ENCODE measurements at regions of chr11 and their contacts with region 1.

Region 1: GRCh38 chr11:65868076-65868667 is 4.4 kb downstream of the EFEMP2 start:
- DNase-seq: peak in 2 of 10 donors; percentile 38 to 61
- ATAC-seq: peak; percentile 57 to 73
- H3K4me3 Mint-ChIP-seq: no peak overlapping the region
- H3K27ac Mint-ChIP-seq: peak overlapping the region in 3 of 10 donors; percentile 14 to 43 (median 33)
- H3K4me1 Mint-ChIP-seq: peaks cover 18 to 46% (median 33%) of the 10 kb centered on the region in 4 donors
- H3K27me3 Mint-ChIP-seq: no peaks in the 10 kb centered on the region

Region 2: DNA sequence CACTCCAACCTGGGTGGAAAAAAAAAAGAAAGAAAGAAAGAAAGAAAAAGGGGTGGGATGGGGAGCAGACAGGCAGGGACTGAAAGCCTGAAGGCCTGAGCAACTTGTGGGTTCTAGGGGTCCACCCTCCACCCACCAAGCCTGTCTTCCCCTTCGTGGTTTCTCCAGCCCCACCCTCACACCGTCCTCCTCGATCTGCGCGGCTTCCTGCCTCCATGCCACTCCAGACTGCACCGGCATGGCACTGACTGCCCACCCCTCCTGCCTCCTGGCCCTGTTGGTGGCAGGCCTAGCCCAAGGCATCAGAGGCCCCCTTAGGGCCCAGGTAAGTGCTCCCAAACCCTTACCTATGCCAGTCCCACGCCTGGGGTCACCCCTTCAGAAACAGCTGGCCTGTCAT is 11.4 kb after region 1 on chr11 and contains the start of gene CTSW:
- POLR2A ChIA-PET with region 1: interaction called, 405 read pairs
- DNase-seq: peak in 7 of 10 donors; percentile 22 to 74 (median 47)
- ATAC-seq: peak; percentile 80 to 82
- H3K4me3 Mint-ChIP-seq: peak within 1 kb of the TSS; percentile 80 to 89 (median 84)
- H3K27ac Mint-ChIP-seq: peak within 1 kb of the TSS; percentile 87 to 95 (median 92)
- H3K4me1 Mint-ChIP-seq: peaks cover 19 to 75% (median 57%) of the 10 kb centered on the region in 4 donors
- H3K27me3 Mint-ChIP-seq: no peaks in the 10 kb centered on the region
- polyA plus RNA-seq, gene CTSW: 255 to 495 (median 475) TPM

Region 3: DNA sequence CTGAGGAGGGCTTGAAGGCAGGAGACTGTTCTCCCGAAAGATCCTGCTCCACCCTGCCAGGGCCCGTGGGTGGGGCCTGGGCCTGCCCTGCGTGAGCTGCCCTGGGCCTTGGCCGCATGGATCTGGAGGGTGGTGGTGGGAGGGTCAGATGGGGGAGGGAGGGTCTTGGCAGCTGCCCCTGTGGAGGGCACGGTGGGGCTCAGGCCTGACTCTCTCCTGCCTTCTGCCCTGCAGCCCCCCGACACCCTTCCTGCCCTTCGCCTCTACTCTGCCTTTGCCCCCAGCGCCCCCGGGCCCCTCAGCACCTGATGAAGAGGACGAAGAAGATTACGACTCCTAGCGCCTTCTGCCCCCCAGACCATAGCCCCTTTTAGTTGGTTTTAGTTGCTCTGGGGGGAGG is 52.9 kb after region 1 on chr11:
- POLR2A ChIA-PET with region 1: no interaction called
- DNase-seq: no peak
- ATAC-seq: no peak
- H3K4me3 Mint-ChIP-seq: peak overlapping the region in 8 of 10 donors; percentile 88 to 97 (median 92)
- H3K27ac Mint-ChIP-seq: peak overlapping the region in 1 of 10 donors; percentile 80
- H3K4me1 Mint-ChIP-seq: peaks cover 11 to 55% (median 37%) of the 10 kb centered on the region in 4 donors
- H3K27me3 Mint-ChIP-seq: no peaks in the 10 kb centered on the region

Measured in naive thymus-derived CD8-positive, alpha-beta T cell (primary cell).